Activated CD4-positive, alpha-beta T cell treated with anti-CD3 and anti-CD28 coated beads, Interleukin-2, amount 10 ng/mL, durations not matched to agents 24 days and 14 days (primary cell): ENCODE measurements at regions of chr14 and their contacts with region 1.

Region 1: DNA sequence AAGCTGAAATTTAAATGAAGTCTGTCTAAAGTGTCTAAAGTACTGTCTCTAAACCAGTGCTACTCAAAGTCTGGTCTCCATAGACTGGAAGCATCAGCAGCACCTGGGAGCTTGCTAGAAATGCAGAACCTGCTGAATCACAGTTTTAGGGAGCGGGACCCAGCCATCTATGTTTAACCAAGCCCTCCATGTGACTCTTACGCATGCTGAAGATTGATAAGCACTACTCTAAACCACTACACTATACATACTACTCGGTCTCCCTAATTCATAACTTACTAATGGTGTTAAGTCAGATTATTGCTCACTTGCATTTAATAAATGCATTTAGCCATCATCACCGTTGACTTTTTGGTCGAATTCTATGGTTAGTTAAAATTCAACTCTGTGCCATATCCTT is 88.8 kb downstream of the SLC25A21 start:
- DNase-seq: no peak
- H3K4me3 Mint-ChIP-seq: no peak overlapping the region
- H3K27ac Mint-ChIP-seq: no peak overlapping the region
- H3K4me1 Mint-ChIP-seq: no peaks in the 10 kb centered on the region
- H3K27me3 Mint-ChIP-seq: no peaks in the 10 kb centered on the region

Region 2: GRCh38 chr14:36952717-36953116 is 130.9 kb before region 1 on chr14:
- intact Hi-C with region 1: no loop called
- DNase-seq: no peak
- H3K4me3 Mint-ChIP-seq: no peak overlapping the region
- H3K27ac Mint-ChIP-seq: no peak overlapping the region
- H3K4me1 Mint-ChIP-seq: no peaks in the 10 kb centered on the region
- H3K27me3 Mint-ChIP-seq: no peaks in the 10 kb centered on the region

Region 3: DNA sequence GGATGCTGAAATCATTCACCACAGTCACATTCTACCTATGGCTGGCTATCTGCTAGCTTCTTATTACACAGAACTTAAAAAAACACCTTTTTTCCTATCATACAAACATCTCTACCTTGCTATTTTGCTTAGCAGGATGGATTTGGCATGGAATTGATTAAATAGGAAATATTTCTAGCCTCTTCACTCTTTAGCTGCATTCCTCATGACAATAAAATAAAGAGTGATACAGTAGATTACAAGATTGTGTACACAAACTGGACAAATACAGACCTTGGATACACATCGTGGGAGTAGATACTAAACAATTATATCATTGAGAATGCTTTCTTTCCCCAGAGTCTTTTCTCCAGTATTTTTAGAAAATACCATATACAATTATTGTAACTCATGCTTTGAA is 29.6 kb after region 1 on chr14:
- intact Hi-C with region 1: loop called (anchors 1 kb)
- DNase-seq: no peak
- H3K4me3 Mint-ChIP-seq: no peak overlapping the region
- H3K27ac Mint-ChIP-seq: no peak overlapping the region
- H3K4me1 Mint-ChIP-seq: no peaks in the 10 kb centered on the region
- H3K27me3 Mint-ChIP-seq: no peaks in the 10 kb centered on the region